Mammary epithelial cell (primary cell): ENCODE measurements at regions of chr20 and their contacts with region 1.

Region 1: GRCh38 chr20:36605399-36606157 is at the start of gene RAB5IF:
- DNase-seq: peak; percentile 98
- H3K4me3 ChIP-seq: peak within 1 kb of the TSS; percentile 69 to 95 (median 93)
- H3K27ac ChIP-seq: peak within 1 kb of the TSS; percentile 64
- H3K4me1 ChIP-seq: peaks cover 16% of the 10 kb centered on the region
- H3K27me3 ChIP-seq: no peaks in the 10 kb centered on the region
- CTCF ChIP-seq: peak; percentile 81 to 94
- total RNA-seq, gene RAB5IF: 61.8 to 115 TPM

Region 2: DNA sequence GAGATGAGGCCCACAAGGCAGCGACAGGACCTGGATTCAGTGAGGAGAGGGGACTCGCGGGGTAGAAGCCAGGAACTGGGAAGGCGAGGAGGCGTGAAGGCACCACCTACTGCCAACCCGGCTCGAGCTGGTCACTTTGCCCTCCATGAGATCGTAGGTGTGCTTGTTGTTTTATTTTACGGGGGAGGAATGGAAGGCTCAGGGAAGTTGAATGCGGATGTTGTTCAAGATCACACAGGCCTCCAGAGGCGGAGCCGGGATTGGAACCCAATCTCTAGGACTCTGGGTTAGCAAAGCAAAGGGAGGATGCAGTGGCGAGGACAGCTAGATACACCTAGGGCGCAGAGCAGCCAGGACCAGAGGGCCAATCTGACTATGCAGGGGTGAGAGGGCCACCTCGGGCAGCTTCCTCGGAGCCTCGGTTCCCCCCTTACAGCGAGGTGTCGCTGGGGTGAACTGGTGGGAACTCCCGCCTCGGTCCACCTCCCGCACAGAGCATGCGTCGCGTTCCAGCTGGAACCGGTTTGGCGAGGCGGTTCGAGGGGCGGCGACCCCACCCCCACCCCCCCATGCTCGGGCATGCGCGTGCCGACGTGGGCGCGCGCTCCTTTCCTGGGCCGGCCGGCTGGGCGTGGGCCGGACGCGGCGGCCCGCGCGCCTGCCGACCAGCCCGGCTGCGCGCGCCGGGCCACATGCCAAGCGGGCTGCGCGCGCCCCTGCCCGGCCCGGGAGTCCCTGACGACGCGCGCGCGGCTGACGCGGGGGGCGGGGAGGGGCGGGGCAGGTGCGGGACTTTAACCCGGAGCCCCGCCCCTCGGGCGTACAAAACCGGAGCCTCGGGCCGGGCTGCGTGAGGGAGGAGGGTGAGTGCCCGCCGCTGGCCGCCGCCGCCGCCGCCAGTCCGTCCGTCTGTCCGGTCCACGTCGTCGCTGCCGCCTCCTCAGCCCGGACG is 144.7 kb before region 1 on chr20:
- CTCF ChIA-PET with region 1: no interaction called
- dilution Hi-C with region 1: no loop called
- in situ Hi-C with region 1: no loop called
- intact Hi-C with region 1: loop called (anchors 5 kb)
- DNase-seq: peak; percentile 87
- H3K4me3 ChIP-seq: peak overlapping the region; percentile 2 to 77 (median 50)
- H3K27ac ChIP-seq: peak overlapping the region; percentile 59
- H3K4me1 ChIP-seq: peaks cover 34% of the 10 kb centered on the region
- H3K27me3 ChIP-seq: no peaks in the 10 kb centered on the region
- CTCF ChIP-seq: no peak

Region 3: DNA sequence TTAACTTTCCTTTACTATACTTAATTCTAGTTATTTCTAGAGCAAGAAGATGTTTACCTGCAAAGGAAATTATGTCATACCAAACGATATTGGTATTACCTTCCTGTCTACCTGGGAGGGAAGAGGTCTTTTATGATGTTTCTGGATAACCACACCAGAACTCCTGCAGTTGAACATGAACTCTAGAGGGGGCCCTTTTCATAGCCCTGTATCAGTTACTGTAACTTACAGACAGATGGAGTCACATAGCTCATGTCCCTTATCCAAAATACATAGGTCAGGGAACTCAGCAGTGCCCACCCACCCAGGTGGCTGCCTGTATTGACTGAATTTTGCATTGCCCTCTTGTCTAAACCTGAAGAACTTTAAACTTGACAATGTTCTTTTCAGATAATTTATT is 99.3 kb before region 1 on chr20:
- CTCF ChIA-PET with region 1: no interaction called
- dilution Hi-C with region 1: no loop called
- in situ Hi-C with region 1: no loop called
- intact Hi-C with region 1: loop called (anchors 2 kb)
- DNase-seq: no peak
- H3K4me3 ChIP-seq: no peak overlapping the region
- H3K27ac ChIP-seq: no peak overlapping the region
- H3K4me1 ChIP-seq: no peaks in the 10 kb centered on the region
- H3K27me3 ChIP-seq: no peaks in the 10 kb centered on the region
- CTCF ChIP-seq: peak; percentile 15 to 37

Region 4: DNA sequence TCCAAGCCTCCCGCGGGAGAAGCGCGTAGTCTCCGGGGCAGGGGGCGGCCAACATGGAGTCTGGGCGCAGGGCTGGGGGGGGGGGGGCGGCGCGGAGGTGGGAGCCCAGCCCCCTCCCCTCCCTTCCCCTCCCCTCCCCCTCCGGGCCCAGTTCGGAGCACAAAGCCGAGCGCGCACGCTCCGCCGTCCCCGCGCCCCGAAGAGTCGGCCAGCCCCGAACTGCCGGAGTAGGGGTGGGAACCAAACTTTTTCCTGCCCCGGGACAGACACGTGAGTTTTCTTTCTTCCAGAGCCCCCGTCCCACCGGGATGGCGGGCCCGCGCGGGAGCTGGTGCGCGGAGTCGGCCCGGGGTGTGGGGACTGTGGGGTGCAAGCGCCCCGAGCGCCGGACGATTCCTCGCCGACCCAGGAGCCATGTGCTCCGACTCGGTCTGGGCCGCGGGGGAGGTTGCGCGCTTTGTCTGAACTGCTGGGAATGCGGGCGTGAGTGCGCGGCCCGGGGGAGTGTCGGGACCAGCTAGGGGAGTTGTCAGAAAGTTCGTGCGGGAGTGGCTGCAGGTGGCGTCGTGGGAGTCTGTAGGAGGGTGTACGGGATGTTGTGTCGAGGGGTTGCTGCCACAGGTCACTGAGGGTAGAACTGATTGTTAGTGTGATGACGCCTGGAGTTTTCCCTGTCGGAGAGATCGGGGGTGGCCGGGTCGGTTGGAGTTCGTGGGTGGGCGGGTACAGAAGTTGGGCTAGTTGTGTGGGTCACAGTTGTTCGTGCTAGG is 31.0 kb before region 1 on chr20:
- CTCF ChIA-PET with region 1: no interaction called
- dilution Hi-C with region 1: loop called (anchors 5 kb)
- in situ Hi-C with region 1: no loop called
- intact Hi-C with region 1: loop called (anchors 2 kb)
- DNase-seq: peak; percentile 32
- H3K4me3 ChIP-seq: peak overlapping the region; percentile 57 to 91 (median 62)
- H3K27ac ChIP-seq: no peak overlapping the region
- H3K4me1 ChIP-seq: peaks cover 15% of the 10 kb centered on the region
- H3K27me3 ChIP-seq: no peaks in the 10 kb centered on the region
- CTCF ChIP-seq: no peak

Region 5: GRCh38 chr20:36728986-36729385 is 123.4 kb after region 1 on chr20:
- CTCF ChIA-PET with region 1: no interaction called
- dilution Hi-C with region 1: no loop called
- in situ Hi-C with region 1: no loop called
- intact Hi-C with region 1: loop called (anchors 5 kb)
- DNase-seq: peak; percentile 58
- H3K4me3 ChIP-seq: no peak overlapping the region
- H3K27ac ChIP-seq: no peak overlapping the region
- H3K4me1 ChIP-seq: peaks cover 5% of the 10 kb centered on the region
- H3K27me3 ChIP-seq: no peaks in the 10 kb centered on the region
- CTCF ChIP-seq: peak; percentile 35 to 39